Activated CD4-positive, alpha-beta memory T cell treated with anti-CD3 and anti-CD28 coated beads for 36 hours (primary cell): ENCODE measurements at regions of chr6 and their contacts with region 1.

Region 1: GRCh38 chr6:14638906-14639761 is 521.6 kb downstream of the CD83 start:
- DNase-seq: no peak
- H3K4me3 Mint-ChIP-seq: no peak overlapping the region
- H3K27ac Mint-ChIP-seq: no peak overlapping the region
- H3K4me1 Mint-ChIP-seq: peaks cover 57% of the 10 kb centered on the region
- H3K27me3 Mint-ChIP-seq: peaks cover 2% of the 10 kb centered on the region

Region 2: DNA sequence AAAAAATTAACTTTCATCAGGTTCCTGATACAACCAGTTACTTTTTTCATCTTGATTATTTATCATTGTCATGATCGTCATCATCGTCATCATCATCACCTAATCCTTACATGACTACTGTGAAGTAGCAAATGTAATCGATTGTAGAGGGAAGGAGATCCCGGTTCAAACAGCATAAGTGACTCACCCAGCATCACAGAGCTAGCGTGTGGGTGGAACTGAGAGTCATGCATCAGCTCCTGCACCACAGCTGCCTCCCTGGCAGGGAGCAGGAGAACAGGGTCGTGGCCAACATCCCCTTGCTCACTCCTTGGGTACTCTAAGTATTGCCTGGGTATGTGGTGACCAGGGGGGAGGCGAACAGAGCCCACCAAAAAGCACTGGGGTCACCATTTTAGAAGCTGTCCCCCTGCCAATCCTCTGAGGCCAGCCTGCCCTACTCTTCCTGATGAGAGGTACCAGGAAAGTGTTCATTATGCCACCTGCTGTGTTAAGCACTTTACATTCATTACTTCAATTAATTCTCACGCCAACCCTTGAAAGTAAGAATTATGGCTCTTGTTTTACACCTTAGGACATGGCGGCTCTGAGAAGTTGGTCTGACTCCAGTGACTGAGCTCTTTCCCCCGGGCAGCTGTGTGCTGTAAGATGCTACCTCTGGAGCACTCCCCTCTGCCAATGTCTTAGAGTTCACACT is 96.3 kb before region 1 on chr6:
- CTCF ChIA-PET with region 1: interaction called, 3 read pairs
- POLR2A ChIA-PET with region 1: no interaction called
- intact Hi-C with region 1: loop called (anchors 5 kb)
- DNase-seq: peak; percentile 90
- H3K4me3 Mint-ChIP-seq: no peak overlapping the region
- H3K27ac Mint-ChIP-seq: peak overlapping the region; percentile 53
- H3K4me1 Mint-ChIP-seq: peaks cover 31% of the 10 kb centered on the region
- H3K27me3 Mint-ChIP-seq: peaks cover 2% of the 10 kb centered on the region

Region 3: GRCh38 chr6:14660806-14661579 is 21.9 kb after region 1 on chr6:
- CTCF ChIA-PET with region 1: no interaction called
- POLR2A ChIA-PET with region 1: interaction called, 4 read pairs
- intact Hi-C with region 1: loop called (anchors 1 kb)
- DNase-seq: peak; percentile 64
- H3K4me3 Mint-ChIP-seq: no peak overlapping the region
- H3K27ac Mint-ChIP-seq: no peak overlapping the region
- H3K4me1 Mint-ChIP-seq: peaks cover 57% of the 10 kb centered on the region
- H3K27me3 Mint-ChIP-seq: no peaks in the 10 kb centered on the region

Region 4: GRCh38 chr6:14734416-14735340 is 95.5 kb after region 1 on chr6:
- CTCF ChIA-PET with region 1: no interaction called
- POLR2A ChIA-PET with region 1: no interaction called
- intact Hi-C with region 1: no loop called
- DNase-seq: peak; percentile 67
- H3K4me3 Mint-ChIP-seq: peak overlapping the region; percentile 73
- H3K27ac Mint-ChIP-seq: peak overlapping the region; percentile 100
- H3K4me1 Mint-ChIP-seq: peaks cover 98% of the 10 kb centered on the region
- H3K27me3 Mint-ChIP-seq: no peaks in the 10 kb centered on the region